Activated CD4-positive, alpha-beta memory T cell treated with anti-CD3 and anti-CD28 coated beads for 36 hours (primary cell): ENCODE measurements at regions of chr14 and their contacts with region 1.

Region 1: DNA sequence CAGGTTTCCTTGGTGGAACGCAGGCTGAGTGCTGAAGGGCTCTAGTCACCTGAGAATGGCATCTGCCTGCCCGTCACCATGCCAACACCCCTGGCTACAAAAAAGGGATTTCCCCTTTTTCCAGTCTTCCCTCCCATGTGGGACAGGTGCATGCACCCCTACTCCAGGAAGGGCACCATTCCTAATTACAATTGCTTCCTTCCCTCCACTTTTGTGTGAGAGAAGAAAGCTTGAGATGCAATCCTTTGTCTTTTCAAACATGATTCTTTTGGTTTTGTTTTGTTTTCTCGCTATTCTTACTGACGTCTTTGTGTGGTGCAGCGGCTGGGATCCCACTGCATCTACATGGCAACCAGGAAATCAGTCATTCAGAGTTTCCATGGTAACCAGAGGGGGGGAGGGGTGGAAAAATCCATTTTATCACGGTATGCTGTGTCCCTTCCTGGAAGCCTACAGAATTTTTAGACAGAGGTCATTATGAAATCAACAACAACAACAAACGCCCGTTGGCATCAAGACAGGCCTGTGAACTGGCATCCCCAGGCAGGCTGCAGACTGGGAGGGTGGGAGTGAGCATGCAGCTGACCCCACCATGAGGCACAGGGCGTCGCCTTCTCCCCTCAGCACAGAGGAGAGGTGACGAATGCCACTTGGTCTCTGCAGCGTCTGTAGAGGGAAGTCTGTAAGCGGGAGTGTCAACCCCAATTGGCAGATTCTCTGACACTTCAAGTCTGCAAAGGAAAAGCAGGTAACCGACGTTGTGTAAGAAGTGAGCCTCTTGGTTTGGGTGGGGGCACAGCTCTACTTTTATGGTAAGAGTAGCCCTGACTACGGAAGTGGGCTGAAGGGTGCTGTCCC is 13.6 kb upstream of the GNG2 start:
- DNase-seq: peak; percentile 91
- H3K4me3 Mint-ChIP-seq: peak overlapping the region; percentile 87
- H3K27ac Mint-ChIP-seq: peak overlapping the region; percentile 98
- H3K4me1 Mint-ChIP-seq: peaks cover 75% of the 10 kb centered on the region
- H3K27me3 Mint-ChIP-seq: peaks cover 2% of the 10 kb centered on the region

Region 2: GRCh38 chr14:50231475-50232275 is 1615.2 kb before region 1 on chr14 and contains the start of gene SOS2:
- CTCF ChIA-PET with region 1: no interaction called
- POLR2A ChIA-PET with region 1: no interaction called
- intact Hi-C with region 1: loop called (anchors 5 kb)
- DNase-seq: peak; percentile 86
- H3K4me3 Mint-ChIP-seq: peak within 1 kb of the TSS; percentile 78
- H3K27ac Mint-ChIP-seq: peak within 1 kb of the TSS; percentile 85
- H3K4me1 Mint-ChIP-seq: peaks cover 40% of the 10 kb centered on the region
- H3K27me3 Mint-ChIP-seq: no peaks in the 10 kb centered on the region
- total RNA-seq, gene SOS2: 19.6 to 20.9 TPM

Region 3: DNA sequence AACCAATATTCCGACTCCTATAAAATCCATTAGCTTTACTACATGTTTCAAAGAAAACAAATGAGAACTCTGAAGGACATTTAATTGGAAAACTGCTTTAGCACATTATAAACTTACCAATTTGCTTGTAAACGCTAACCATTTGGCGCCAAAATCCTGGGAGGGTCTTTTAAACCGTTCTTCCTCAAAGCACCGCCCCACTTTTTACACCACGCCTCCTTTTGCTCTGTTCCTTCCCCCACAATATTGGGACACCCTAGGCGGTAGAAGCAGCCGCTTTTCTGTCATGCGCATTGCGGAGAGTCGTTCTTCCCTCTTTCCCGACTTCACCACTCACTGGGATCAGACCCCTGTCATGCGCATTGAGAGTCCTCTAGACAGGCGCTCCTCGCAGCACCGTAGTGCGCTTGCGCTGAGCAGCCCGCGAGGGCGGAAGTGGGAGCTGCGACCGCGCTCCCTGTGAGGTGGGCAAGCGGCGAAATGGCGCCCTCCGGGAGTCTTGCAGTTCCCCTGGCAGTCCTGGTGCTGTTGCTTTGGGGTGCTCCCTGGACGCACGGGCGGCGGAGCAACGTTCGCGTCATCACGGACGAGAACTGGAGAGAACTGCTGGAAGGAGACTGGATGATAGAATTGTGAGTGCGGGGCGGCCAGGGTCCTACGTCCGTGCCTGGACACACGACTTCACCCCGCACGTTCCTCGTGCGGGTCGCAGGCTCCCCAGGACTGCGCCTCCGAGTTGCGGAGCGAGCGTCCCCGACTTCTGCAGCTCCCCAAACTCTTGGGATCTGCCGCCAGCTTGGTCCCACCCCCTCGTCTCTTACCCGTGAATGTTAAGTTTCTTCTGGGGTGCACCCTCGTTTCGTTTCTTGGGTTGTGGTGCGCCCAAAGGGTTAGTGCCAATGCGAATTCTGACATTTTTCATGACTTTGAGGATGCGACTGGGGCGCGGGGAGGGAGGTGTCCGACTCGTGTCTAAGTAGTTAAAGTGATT is 606.8 kb before region 1 on chr14 and contains the start of gene TMX1:
- CTCF ChIA-PET with region 1: no interaction called
- POLR2A ChIA-PET with region 1: no interaction called
- intact Hi-C with region 1: loop called (anchors 5 kb)
- DNase-seq: peak; percentile 94
- H3K4me3 Mint-ChIP-seq: no peak within 1 kb of the TSS
- H3K27ac Mint-ChIP-seq: no peak within 1 kb of the TSS
- H3K4me1 Mint-ChIP-seq: peaks cover 37% of the 10 kb centered on the region
- H3K27me3 Mint-ChIP-seq: no peaks in the 10 kb centered on the region
- total RNA-seq, gene TMX1: 57.1 to 58.1 TPM

Region 4: GRCh38 chr14:51759950-51760349 is 86.9 kb before region 1 on chr14:
- CTCF ChIA-PET with region 1: no interaction called
- POLR2A ChIA-PET with region 1: no interaction called
- intact Hi-C with region 1: no loop called
- DNase-seq: no peak
- H3K4me3 Mint-ChIP-seq: no peak overlapping the region
- H3K27ac Mint-ChIP-seq: no peak overlapping the region
- H3K4me1 Mint-ChIP-seq: peaks cover 5% of the 10 kb centered on the region
- H3K27me3 Mint-ChIP-seq: peaks cover 13% of the 10 kb centered on the region

Region 5: DNA sequence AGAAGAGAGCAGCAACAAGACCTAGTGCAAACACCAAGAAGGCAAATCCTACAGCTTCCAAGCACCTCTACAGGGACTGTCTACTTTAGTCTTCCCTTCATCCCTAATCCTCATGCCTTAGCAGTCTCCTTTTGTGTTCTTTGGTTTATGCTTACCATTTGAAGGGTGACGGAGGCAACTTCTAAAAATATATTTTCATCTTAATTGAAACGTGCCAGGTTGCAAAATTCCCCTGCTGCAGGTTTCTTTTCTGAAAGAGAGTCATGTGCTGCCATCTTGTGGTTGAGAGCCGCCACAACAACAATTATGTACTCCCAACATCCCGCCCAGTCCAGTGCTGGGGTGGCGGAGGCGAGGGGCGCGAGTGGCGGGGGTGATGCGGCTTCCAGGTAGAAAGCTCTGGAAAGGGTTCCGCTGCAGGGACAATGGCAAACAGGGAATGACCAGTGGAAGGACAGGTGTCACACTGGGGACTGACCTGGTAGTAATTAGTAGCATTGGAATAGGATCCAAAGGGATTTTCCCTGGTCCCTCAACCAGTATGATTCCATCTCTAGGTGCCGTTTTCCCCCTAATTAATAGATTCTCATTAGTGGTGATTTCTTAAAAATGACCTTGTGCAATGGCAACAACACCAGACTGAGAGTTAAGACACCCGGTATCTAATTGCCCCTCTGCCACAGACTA is 66.7 kb before region 1 on chr14:
- CTCF ChIA-PET with region 1: interaction called, 4 read pairs
- POLR2A ChIA-PET with region 1: no interaction called
- intact Hi-C with region 1: loop called (anchors 5 kb)
- DNase-seq: peak; percentile 81
- H3K4me3 Mint-ChIP-seq: no peak overlapping the region
- H3K27ac Mint-ChIP-seq: no peak overlapping the region
- H3K4me1 Mint-ChIP-seq: peaks cover 24% of the 10 kb centered on the region
- H3K27me3 Mint-ChIP-seq: peaks cover 18% of the 10 kb centered on the region

Region 6: DNA sequence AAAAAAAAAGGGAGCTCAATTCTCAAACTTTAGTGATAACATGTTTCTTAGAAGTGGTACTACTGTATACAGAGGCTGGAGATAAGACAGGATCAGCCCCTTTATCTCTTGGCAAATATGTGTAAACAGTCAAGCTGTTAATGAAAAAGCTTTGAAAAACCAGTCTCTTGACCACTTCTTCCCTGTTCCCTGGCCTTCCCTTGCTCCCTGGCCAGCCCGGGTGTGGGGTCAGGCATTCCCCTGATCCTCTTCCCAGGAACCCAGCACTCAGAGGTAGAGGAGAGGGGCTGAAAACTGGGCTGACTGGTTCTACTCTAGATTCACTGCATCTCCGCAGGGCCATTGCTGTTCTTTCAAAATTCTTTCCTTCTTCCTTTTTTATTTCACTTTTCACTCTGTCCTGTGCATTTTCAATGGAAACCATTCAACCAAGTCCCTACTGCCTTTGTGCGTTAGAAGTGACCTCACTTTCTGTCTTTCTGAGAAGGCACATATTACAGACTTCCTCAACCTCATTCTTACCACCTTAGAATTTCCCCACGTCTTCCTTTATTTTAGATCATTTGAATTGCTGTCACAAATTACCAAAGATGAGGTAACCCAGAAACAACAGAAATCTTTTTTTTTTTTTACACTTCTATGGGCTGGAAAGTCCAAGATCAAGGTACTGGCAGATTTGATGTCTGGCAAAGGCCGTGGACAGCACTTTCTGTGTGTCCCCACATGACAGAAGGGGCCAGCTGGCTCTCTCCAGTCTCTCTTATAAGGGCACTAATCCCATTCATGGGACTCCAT is 19.3 kb after region 1 on chr14:
- CTCF ChIA-PET with region 1: interaction called, 26 read pairs
- POLR2A ChIA-PET with region 1: interaction called, 64 read pairs
- intact Hi-C with region 1: loop called (anchors 1 kb)
- DNase-seq: peak; percentile 46
- H3K4me3 Mint-ChIP-seq: no peak overlapping the region
- H3K27ac Mint-ChIP-seq: no peak overlapping the region
- H3K4me1 Mint-ChIP-seq: peaks cover 19% of the 10 kb centered on the region
- H3K27me3 Mint-ChIP-seq: no peaks in the 10 kb centered on the region

Region 7: DNA sequence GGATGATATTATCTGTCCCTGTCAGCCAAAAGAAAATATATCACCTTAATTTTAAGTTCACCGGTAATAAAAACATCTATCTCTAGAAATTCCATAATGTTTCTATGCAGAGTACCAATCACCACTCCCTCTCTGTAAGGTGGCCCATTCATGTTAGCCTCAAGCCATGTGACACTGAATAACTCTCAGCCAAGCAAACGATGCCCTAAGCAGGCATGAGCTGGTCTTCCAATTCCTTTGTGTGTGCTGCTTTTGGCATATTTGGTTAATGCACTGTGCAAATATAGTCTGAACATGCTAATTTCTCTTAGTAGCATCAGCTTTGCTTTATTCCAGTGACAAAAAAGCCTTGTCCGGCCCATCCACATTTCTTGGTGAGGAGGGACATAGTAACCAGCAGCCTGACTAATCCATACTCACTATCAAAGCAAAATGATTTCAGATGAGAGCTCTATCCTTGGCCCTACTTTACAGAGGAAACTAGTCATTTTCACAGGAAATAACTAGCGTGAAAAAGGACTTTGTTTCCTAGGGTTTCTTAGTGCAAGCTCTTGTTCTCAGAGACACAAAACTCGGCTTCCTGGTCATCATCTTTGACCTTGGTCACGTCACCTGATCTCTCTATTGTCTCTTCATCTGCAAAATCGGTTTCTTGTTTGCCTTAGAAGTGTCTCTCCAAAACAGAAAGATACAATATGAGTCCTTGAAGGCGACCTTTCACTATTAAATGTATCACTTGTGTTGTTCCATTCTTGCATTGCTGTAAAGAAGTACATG is 83.2 kb after region 1 on chr14:
- CTCF ChIA-PET with region 1: no interaction called
- POLR2A ChIA-PET with region 1: no interaction called
- intact Hi-C with region 1: loop called (anchors 1 kb)
- DNase-seq: no peak
- H3K4me3 Mint-ChIP-seq: no peak overlapping the region
- H3K27ac Mint-ChIP-seq: peak overlapping the region; percentile 81
- H3K4me1 Mint-ChIP-seq: peaks cover 69% of the 10 kb centered on the region
- H3K27me3 Mint-ChIP-seq: no peaks in the 10 kb centered on the region

Region 8: DNA sequence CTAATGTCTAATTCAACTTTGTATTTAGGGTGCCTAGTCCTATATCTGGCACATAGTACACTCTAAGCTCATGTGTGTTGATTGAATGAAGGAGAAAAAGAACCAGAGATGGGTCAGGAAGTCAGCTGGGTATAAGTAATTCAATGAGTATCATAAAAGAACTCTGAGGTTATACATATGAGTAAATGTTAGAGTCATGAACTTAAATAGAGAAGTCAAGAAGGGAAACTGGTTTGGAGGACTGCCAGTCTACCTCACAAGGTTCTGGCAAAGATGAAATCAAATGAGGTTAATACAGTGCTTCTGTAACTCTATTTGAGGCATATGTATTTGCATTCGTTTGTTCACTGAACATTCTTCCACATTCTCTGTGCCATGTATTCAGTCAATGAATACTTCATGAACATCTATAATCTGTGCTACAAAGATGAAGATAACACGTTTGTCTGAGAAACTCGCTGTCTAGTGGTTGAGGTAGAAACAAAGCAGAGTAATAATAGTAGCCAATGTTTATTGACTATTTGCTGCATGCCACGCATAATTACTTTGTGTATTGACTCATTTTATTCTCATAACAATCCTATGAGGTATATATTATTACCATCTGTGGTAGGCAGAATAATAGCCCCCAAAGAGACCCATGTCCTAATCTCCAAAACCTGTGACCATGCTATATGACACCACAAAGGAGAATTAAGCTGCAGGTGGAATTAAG is 556.1 kb after region 1 on chr14:
- CTCF ChIA-PET with region 1: no interaction called
- POLR2A ChIA-PET with region 1: no interaction called
- intact Hi-C with region 1: loop called (anchors 10 kb)
- DNase-seq: peak; percentile 51
- H3K4me3 Mint-ChIP-seq: no peak overlapping the region
- H3K27ac Mint-ChIP-seq: peak overlapping the region; percentile 16
- H3K4me1 Mint-ChIP-seq: peaks cover 59% of the 10 kb centered on the region
- H3K27me3 Mint-ChIP-seq: peaks cover 15% of the 10 kb centered on the region